Left ventricle myocardium inferior (tissue), 1 donor: ENCODE measurements at regions of chr2 and their contacts with region 1.

Region 1: GRCh38 chr2:26978061-26978596 is 7.7 kb downstream of the MAPRE3 start:
- DNase-seq: peak; percentile 37
- H3K4me3 ChIP-seq: no peak overlapping the region
- H3K27ac ChIP-seq: peak overlapping the region; percentile 17
- H3K4me1 ChIP-seq: peaks cover 66% of the 10 kb centered on the region
- H3K27me3 ChIP-seq: no peaks in the 10 kb centered on the region
- CTCF ChIP-seq: no peak

Region 2: DNA sequence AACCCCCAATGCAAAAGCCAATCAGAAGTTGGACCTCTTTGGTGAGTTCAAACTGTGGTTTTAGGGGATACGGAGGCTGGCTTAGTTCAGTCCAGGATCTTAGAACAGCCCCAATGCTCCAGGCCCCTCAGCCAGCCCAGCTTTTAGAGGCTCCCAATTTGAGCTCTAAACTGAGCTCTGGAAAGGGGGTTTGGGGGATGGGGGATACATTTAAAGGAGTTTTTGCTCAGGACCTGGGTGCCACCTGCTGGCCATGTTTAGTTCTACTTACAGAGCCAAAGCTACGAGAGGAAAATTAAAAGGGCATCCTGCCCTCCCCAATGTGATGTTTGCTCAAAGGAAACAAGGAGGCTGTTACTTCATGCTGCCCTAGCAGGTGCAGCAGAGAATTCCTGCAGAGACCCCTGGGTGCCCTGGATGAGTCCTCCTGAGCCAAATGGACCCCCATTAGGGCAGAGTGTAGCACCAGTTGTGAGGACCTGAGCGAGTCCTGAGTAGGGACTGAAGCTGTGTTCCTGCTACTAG is 38.7 kb after region 1 on chr2:
- intact Hi-C with region 1: loop called (anchors 5 kb)
- DNase-seq: peak; percentile 41
- H3K4me3 ChIP-seq: no peak overlapping the region
- H3K27ac ChIP-seq: no peak overlapping the region
- H3K4me1 ChIP-seq: peaks cover 76% of the 10 kb centered on the region
- H3K27me3 ChIP-seq: no peaks in the 10 kb centered on the region
- CTCF ChIP-seq: peak; percentile 71

Region 3: DNA sequence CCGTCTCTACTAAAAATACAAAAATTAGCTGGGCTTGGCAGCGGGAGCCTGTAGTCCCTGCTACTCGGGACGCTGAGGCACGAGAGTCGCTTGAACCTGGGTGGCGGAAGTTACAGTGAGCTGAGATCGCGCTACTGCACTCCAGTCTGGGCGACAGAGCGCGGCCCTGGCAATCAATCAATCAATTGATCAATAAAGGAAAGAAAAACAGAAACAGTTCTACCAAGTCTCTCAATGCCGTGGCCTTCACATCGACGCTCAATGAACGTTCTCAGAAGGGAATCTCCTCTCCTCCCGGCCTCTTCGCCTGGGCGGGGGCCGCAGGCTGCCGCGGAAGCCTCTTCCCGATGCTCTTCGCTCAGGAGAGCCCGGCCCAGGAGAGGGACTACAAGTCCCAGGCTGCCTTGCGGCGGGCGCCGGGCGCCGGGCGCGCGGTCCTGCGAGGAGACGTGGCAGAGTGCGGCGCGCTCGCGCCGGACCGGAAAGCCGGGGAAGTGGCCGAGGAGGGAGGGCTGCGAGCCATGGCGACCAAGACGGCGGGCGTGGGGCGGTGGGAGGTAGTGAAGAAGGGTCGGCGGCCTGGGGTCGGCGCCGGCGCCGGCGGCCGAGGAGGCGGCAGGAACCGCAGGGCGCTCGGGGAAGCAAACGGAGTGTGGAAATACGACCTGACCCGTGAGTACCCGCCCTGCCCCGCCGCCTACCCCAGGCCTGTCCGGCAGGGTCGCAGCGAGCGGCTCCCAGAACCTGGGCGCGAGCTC is 54.5 kb after region 1 on chr2 and contains the start of gene TMEM214:
- intact Hi-C with region 1: no loop called
- DNase-seq: peak; percentile 92
- H3K4me3 ChIP-seq: peak within 1 kb of the TSS; percentile 79
- H3K27ac ChIP-seq: peak within 1 kb of the TSS; percentile 92
- H3K4me1 ChIP-seq: peaks cover 38% of the 10 kb centered on the region
- H3K27me3 ChIP-seq: no peaks in the 10 kb centered on the region
- CTCF ChIP-seq: peak; percentile 30
- total RNA-seq, gene TMEM214: 31.4 TPM